A673 (cell line): ENCODE measurements at regions of chr2 and their contacts with region 1.

Region 1: GRCh38 chr2:69798909-69799526 is 30.4 kb upstream of the GMCL1 start:
- DNase-seq: peak; percentile 21
- H3K4me3 ChIP-seq: no peak overlapping the region
- H3K27ac ChIP-seq: no peak overlapping the region
- H3K4me1 ChIP-seq: peaks cover 6% of the 10 kb centered on the region
- H3K27me3 ChIP-seq: no peaks in the 10 kb centered on the region
- CTCF ChIP-seq: no peak

Region 2: GRCh38 chr2:69604026-69604678 is 194.9 kb before region 1 on chr2:
- CTCF ChIA-PET with region 1: no interaction called
- POLR2A ChIA-PET with region 1: no interaction called
- intact Hi-C with region 1: no loop called
- DNase-seq: no peak
- H3K4me3 ChIP-seq: no peak overlapping the region
- H3K27ac ChIP-seq: no peak overlapping the region
- H3K4me1 ChIP-seq: peaks cover 6% of the 10 kb centered on the region
- H3K27me3 ChIP-seq: no peaks in the 10 kb centered on the region
- CTCF ChIP-seq: no peak

Region 3: DNA sequence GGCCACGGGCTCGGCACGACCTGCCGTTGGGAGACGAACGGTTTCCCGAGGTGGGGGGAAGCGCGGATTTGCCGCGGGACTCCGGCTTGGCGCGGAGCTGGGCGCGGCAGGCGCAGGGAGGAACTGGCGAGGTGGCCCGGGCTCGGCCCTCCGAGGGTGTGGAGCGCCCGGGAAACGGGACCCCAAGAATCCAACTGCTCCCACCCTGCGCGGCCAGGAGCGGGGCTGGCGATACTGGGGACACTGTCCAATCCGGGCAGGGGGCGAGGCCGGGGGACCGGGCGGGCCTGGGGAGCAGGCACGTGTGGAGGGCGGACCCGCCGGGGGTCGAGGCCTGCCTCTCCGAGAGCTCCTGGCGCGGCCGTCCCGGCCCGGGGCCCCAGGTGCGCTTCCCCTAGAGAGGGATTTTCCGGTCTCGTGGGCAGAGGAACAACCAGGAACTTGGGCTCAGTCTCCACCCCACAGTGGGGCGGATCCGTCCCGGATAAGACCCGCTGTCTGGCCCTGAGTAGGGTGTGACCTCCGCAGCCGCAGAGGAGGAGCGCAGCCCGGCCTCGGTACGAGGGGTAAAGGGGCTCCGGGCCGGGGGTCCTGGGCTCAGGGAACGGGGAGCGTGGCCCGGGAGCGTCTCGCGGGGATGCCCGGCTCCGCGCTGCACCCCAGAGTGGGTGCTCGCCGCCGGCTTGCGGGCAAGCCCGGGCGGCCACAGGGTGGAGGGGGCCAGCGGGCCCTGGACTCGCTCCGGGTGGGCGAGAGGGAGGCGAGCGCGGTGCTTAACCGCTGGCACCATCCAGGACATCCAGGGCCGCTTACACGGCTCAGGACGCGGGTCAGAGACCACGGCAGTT is 57.2 kb before region 1 on chr2 and contains the start of gene ANXA4:
- CTCF ChIA-PET with region 1: no interaction called
- POLR2A ChIA-PET with region 1: no interaction called
- intact Hi-C with region 1: loop called (anchors 10 kb)
- DNase-seq: peak; percentile 56
- H3K4me3 ChIP-seq: peak within 1 kb of the TSS; percentile 54
- H3K27ac ChIP-seq: peak within 1 kb of the TSS; percentile 51
- H3K4me1 ChIP-seq: peaks cover 3% of the 10 kb centered on the region
- H3K27me3 ChIP-seq: no peaks in the 10 kb centered on the region
- CTCF ChIP-seq: no peak
- total RNA-seq, gene ANXA4: 5.1 and 6.5 TPM in 2 replicates

Region 4: DNA sequence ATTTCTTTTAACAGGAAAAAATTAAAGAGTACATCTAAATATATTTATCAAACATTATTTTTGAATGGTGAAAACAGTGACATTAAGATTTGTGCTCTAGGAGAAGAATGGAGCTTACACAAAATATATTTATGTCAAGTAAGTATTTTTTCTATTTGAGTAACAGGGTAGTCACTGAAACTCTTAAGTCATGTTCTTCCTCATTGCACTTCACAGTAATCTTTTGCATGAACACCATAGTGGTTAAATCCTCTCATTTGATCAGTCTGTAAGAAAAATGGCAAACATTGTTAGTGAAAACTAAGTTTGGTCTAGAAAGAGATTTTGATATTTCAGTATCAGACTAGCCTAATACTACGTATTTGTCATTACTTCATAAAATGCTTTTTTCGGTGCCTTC is 38.5 kb after region 1 on chr2:
- CTCF ChIA-PET with region 1: no interaction called
- POLR2A ChIA-PET with region 1: no interaction called
- intact Hi-C with region 1: no loop called
- DNase-seq: no peak
- H3K4me3 ChIP-seq: no peak overlapping the region
- H3K27ac ChIP-seq: no peak overlapping the region
- H3K4me1 ChIP-seq: no peaks in the 10 kb centered on the region
- H3K27me3 ChIP-seq: no peaks in the 10 kb centered on the region
- CTCF ChIP-seq: no peak

Region 5: DNA sequence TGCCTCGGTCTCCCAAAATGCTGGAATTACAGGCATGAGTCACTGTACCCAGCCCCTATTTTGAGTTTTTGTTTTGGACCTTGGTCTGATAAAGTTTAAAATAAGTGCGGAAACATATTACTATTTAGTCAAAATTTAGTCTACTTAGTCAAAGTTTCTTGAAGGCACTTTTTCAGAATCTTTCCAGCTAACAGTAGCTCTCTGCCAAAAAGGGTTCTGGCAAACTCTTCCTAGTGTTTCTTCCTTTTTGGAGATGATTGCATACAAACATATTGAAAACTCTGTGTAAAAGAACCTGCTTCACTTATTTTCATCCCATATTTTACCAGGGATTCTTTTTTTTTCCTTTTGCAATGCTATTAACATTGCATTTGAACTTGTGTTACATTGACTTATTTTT is 59.2 kb after region 1 on chr2:
- CTCF ChIA-PET with region 1: no interaction called
- POLR2A ChIA-PET with region 1: interaction called, 10 read pairs
- intact Hi-C with region 1: no loop called
- DNase-seq: no peak
- H3K4me3 ChIP-seq: no peak overlapping the region
- H3K27ac ChIP-seq: no peak overlapping the region
- H3K4me1 ChIP-seq: no peaks in the 10 kb centered on the region
- H3K27me3 ChIP-seq: no peaks in the 10 kb centered on the region
- CTCF ChIP-seq: no peak

Region 6: GRCh38 chr2:69946351-69947077 is 147.5 kb after region 1 on chr2:
- CTCF ChIA-PET with region 1: no interaction called
- POLR2A ChIA-PET with region 1: no interaction called
- intact Hi-C with region 1: no loop called
- DNase-seq: no peak
- H3K4me3 ChIP-seq: no peak overlapping the region
- H3K27ac ChIP-seq: no peak overlapping the region
- H3K4me1 ChIP-seq: no peaks in the 10 kb centered on the region
- H3K27me3 ChIP-seq: no peaks in the 10 kb centered on the region
- CTCF ChIP-seq: no peak